ENCODE measurements at regions of chr2 and their contacts with region 1.

Region 1: GRCh38 chr2:191030521-191031154 is 16.7 kb upstream of the STAT1 start:
- DNase-seq: peak; percentile 86
- H3K4me3 Mint-ChIP-seq: peak overlapping the region; percentile 21
- H3K27ac Mint-ChIP-seq: peak overlapping the region; percentile 18
- H3K4me1 Mint-ChIP-seq: peaks cover 44% of the 10 kb centered on the region
- H3K27me3 Mint-ChIP-seq: no peaks in the 10 kb centered on the region

Region 2: DNA sequence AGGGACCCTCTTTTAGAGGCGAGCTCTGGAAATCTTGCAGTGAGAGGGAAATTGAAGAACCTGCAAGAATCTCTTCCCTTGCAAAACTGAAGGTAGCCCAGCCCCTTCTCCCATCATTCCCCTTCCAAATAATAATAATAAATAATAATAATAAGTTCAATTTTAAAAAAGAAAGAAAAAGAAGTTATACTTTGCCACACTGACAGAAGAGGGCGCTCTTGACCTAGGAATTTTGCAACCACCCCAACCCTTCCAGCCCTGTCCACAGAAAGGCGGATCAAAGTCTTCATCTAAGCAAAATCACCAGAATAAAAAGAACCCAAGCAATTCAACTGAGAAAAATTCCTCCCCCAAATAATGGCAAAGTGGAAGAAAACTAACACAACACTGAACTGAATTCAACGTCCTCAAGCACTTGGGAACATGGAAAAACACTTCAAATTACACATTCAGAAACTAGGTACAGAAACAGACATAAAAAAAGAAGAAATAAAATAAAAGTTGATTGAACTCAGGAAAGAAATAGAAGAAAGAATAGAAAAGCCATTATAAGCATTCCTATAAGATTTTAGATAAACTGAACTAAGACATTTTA is 248.9 kb before region 1 on chr2:
- intact Hi-C with region 1: loop called (anchors 1 kb)
- DNase-seq: peak; percentile 85
- H3K4me3 Mint-ChIP-seq: no peak overlapping the region
- H3K27ac Mint-ChIP-seq: no peak overlapping the region
- H3K4me1 Mint-ChIP-seq: peaks cover 38% of the 10 kb centered on the region
- H3K27me3 Mint-ChIP-seq: no peaks in the 10 kb centered on the region

Region 3: GRCh38 chr2:190996338-190996946 is 34.2 kb before region 1 on chr2:
- intact Hi-C with region 1: loop called (anchors 1 kb)
- DNase-seq: peak; percentile 73
- H3K4me3 Mint-ChIP-seq: peak overlapping the region; percentile 45
- H3K27ac Mint-ChIP-seq: peak overlapping the region; percentile 77
- H3K4me1 Mint-ChIP-seq: peaks cover 78% of the 10 kb centered on the region
- H3K27me3 Mint-ChIP-seq: no peaks in the 10 kb centered on the region

Region 4: GRCh38 chr2:191066197-191066918 is 35.7 kb after region 1 on chr2:
- intact Hi-C with region 1: no loop called
- DNase-seq: peak; percentile 75
- H3K4me3 Mint-ChIP-seq: peak overlapping the region; percentile 88
- H3K27ac Mint-ChIP-seq: peak overlapping the region; percentile 92
- H3K4me1 Mint-ChIP-seq: peaks cover 76% of the 10 kb centered on the region
- H3K27me3 Mint-ChIP-seq: no peaks in the 10 kb centered on the region